GM10248 (cell line): ENCODE measurements at regions of chr7 and their contacts with region 1.

Region 1: GRCh38 chr7:4641667-4642467 is 40.2 kb upstream of the FOXK1 start:
- DNase-seq: peak; percentile 97
- CTCF ChIP-seq: peak; percentile 74

Region 2: DNA sequence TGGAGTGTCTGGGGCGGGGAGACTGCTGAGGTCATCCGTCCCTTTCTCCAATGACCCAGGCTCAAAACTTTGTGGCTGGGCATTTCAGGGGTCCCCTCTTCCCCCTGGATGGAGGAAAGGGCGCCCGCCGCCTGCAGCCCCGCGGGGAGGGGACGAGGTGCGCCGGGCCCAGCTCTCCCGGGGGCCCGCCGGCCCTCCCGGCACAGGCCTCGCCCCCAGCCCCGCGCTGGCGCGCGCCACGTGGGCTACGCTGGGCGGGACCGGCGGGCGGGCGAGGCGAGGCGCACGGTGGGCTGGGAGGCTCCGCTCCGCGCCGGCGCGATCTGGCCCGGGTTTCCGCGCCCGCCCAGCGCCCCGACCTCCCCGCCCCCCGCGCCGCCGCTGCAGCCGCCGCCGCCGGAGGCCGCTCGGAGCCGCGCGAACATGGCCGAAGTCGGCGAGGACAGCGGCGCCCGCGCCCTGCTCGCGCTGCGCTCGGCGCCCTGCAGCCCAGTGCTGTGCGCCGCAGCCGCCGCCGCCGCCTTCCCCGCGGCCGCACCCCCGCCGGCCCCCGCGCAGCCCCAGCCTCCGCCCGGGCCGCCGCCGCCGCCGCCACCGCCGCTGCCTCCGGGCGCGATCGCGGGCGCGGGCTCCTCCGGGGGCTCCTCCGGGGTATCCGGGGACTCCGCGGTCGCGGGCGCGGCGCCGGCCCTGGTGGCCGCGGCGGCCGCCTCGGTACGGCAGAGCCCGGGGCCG is 40.2 kb after region 1 on chr7 and contains the start of gene FOXK1:
- CTCF ChIA-PET with region 1: interaction called, 22 read pairs
- POLR2A ChIA-PET with region 1: interaction called, 11 read pairs
- DNase-seq: peak; percentile 91
- CTCF ChIP-seq: no peak

Region 3: DNA sequence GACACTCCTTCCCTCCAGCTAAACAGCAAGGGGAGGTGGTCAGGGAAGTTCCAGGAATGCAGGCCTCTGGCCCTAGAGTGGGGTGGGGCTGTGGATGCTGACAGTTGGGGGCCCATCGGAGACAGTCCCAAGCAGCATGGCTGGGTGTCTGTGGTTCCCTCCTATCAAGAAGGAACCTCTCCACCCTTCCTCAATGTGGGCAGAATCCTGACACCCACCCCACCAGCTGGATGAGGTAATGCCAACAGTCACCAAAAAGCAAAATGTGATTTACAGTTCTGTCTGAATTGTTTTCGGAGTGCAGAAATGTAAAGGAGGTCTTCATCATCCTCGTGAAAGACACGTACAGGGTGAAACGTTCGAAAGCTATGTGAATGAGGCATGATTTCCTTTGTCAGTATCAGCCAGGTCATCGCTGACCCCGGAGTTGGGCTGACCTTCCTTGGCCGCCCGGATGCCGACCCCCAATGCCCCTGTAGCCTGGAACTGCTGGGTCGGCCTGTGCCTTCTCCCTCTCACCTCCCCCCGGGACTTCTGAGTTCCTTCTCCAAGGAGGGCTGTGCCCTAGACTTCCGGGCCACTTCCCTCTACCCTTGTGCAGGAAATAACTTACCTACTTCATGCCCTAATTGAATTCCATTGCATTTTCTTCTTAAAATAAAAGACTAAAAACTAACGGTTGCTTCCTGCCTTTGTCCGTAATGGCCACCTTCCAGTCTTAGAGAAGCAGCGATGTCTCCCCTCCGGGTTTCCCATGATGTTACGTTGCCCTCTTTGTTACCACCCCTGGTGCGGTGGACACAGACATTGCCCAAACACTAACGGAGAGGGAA is 64.7 kb after region 1 on chr7:
- CTCF ChIA-PET with region 1: no interaction called
- POLR2A ChIA-PET with region 1: no interaction called
- DNase-seq: no peak
- CTCF ChIP-seq: no peak